ENCODE measurements at regions of chr15 and their contacts with region 1.

Region 1: GRCh38 chr15:66851226-66852071 is 149.4 kb downstream of the SMAD6 start:
- DNase-seq: peak; percentile 68 to 77 (median 76)
- H3K4me3 ChIP-seq: no peak overlapping the region
- H3K4me3 Mint-ChIP-seq: peak overlapping the region; percentile 55 to 78
- H3K27ac ChIP-seq: no peak overlapping the region
- H3K27ac Mint-ChIP-seq: peak overlapping the region in 1 of 7 donors; percentile 41
- H3K4me1 ChIP-seq: peaks cover 9 to 12% of the 10 kb centered on the region in 2 donors
- H3K4me1 Mint-ChIP-seq: peaks cover 20% of the 10 kb centered on the region
- H3K27me3 ChIP-seq: peaks cover 0 to 2% of the 10 kb centered on the region in 2 donors
- H3K27me3 Mint-ChIP-seq: peaks cover 8 to 26% (median 26%) of the 10 kb centered on the region in 3 donors
- CTCF ChIP-seq: peak; percentile 96

Region 2: DNA sequence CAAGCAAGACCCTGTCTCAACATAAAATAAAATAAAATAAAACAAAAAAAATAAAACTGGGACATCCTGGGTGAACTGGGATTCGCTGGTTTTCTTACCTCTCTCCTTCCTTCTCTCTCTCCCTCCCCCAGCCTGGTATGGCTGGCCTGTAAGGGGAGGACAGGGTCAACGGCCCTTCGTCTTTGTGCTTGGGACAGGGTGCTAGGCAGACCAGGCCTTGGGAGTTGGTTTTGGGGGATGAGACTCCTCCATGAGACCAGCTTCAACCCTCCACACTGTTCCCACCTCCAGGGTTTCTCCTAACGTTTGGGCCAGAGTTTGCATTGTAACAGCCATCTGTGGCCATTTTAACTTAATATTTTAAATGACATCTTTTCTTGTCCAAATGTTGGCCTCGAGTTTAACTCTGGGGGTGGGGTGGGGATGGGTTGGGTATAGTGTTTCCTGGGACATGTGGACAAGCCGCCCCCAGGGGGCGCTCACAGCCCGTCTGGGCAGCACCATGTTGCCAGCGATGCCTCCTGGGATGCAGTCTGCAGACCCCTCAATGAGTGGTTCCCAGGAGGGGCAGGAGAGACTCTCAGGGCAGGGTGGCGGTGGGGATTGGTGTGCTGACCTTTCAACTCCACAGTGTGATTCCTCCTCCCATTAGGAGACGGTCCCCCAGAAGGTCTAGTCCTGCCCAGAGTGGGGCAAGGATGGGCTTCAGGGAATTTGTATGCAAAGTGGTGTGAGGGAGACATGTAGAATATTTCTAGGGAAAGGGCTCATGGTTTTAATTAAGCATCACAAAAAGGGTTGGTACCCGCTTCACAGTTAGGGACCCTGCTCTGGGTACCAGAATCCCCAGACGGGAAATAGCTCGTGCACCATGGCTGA is 247.9 kb before region 1 on chr15:
- intact Hi-C with region 1: loop called (anchors 2 to 5 kb)
- DNase-seq: peak; percentile 59 to 77 (median 66)
- H3K4me3 ChIP-seq: no peak overlapping the region
- H3K4me3 Mint-ChIP-seq: no peak overlapping the region
- H3K27ac ChIP-seq: no peak overlapping the region
- H3K27ac Mint-ChIP-seq: peak overlapping the region in 1 of 7 donors; percentile 80
- H3K4me1 ChIP-seq: no peaks in the 10 kb centered on the region
- H3K4me1 Mint-ChIP-seq: no peaks in the 10 kb centered on the region
- H3K27me3 ChIP-seq: no peaks in the 10 kb centered on the region
- H3K27me3 Mint-ChIP-seq: peaks cover 2 to 12% (median 3%) of the 10 kb centered on the region in 3 donors
- CTCF ChIP-seq: peak; percentile 90

Region 3: GRCh38 chr15:66619151-66619903 is 232.1 kb before region 1 on chr15:
- intact Hi-C with region 1: loop called (anchors 5 kb)
- DNase-seq: peak; percentile 52 to 73 (median 70)
- H3K4me3 ChIP-seq: no peak overlapping the region
- H3K4me3 Mint-ChIP-seq: no peak overlapping the region
- H3K27ac ChIP-seq: peak overlapping the region in 1 of 2 donors; percentile 34
- H3K27ac Mint-ChIP-seq: peak overlapping the region in 3 of 7 donors; percentile 40 to 79 (median 60)
- H3K4me1 ChIP-seq: peaks cover 65 to 69% of the 10 kb centered on the region in 2 donors
- H3K4me1 Mint-ChIP-seq: peaks cover 70% of the 10 kb centered on the region
- H3K27me3 ChIP-seq: peaks cover 0 to 6% of the 10 kb centered on the region in 2 donors
- H3K27me3 Mint-ChIP-seq: peaks cover 3 to 14% (median 5%) of the 10 kb centered on the region in 3 donors
- CTCF ChIP-seq: peak; percentile 94

Region 4: DNA sequence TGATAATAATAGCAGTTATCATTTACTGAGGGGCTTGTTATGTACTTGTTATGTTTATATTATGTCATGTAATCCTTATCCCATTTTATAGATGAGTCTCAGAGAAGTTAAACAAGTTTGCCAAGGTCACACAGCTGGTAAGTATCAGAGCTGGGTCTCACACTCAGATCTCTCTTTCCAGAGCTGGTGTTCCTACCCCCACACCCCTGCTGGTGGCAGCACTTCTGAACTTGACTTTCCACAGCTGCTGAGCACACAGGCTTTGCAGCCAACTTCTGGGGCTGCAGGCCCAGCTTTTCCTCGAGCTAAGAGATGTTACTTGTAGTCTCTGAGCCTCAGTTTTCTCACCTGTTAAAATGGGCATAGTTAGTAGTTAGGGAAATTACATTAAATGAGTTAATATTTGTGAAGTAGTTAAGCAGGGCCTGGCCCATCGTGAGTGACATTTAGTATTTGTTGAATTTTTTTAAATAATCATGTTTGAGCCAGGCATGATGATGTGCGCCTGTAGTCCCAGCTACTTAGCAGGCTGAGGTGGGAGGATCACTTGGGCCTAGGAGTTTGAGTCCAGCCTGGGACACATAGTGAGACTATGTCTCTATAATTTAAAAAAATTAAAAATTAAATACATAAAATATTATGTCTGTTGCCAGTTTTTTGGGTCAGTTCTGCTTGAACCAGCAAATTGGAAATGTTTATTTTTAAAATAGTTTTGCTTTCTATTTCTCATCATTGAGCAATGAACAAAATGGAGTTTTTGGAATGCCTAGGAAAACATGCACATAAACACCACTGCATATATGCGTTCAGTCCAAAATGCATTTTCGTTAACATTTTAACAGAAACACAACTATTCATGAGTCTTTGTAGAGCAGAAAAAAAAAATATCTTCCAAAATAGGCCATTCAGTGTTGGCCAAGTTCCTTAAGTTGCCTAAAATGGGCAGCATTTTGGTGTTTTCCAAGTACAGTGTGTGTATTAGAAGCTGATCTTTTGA is 62.1 kb before region 1 on chr15:
- intact Hi-C with region 1: loop called in 1 of 2 experiments (anchors 5 kb)
- DNase-seq: peak; percentile 7 to 24 (median 9)
- H3K4me3 ChIP-seq: no peak overlapping the region
- H3K4me3 Mint-ChIP-seq: no peak overlapping the region
- H3K27ac ChIP-seq: no peak overlapping the region
- H3K27ac Mint-ChIP-seq: no peak overlapping the region
- H3K4me1 ChIP-seq: no peaks in the 10 kb centered on the region
- H3K4me1 Mint-ChIP-seq: peaks cover 2% of the 10 kb centered on the region
- H3K27me3 ChIP-seq: no peaks in the 10 kb centered on the region
- H3K27me3 Mint-ChIP-seq: peaks cover 2 to 3% (median 3%) of the 10 kb centered on the region in 3 donors
- CTCF ChIP-seq: peak; percentile 40

Region 5: GRCh38 chr15:66803182-66803729 is 48.2 kb before region 1 on chr15:
- intact Hi-C with region 1: loop called in 1 of 2 experiments (anchors 5 kb)
- DNase-seq: peak; percentile 51 to 77 (median 61)
- H3K4me3 ChIP-seq: no peak overlapping the region
- H3K4me3 Mint-ChIP-seq: no peak overlapping the region
- H3K27ac ChIP-seq: peak overlapping the region in 1 of 2 donors; percentile 4
- H3K27ac Mint-ChIP-seq: peak overlapping the region in 1 of 7 donors; percentile 38
- H3K4me1 ChIP-seq: peaks cover 11 to 15% of the 10 kb centered on the region in 2 donors
- H3K4me1 Mint-ChIP-seq: peaks cover 24% of the 10 kb centered on the region
- H3K27me3 ChIP-seq: no peaks in the 10 kb centered on the region
- H3K27me3 Mint-ChIP-seq: peaks cover 0 to 5% (median 3%) of the 10 kb centered on the region in 3 donors
- CTCF ChIP-seq: no peak

Region 6: GRCh38 chr15:66835321-66835878 is 16.0 kb before region 1 on chr15:
- intact Hi-C with region 1: loop called in 1 of 2 experiments (anchors 1 kb)
- DNase-seq: peak; percentile 72 to 83 (median 80)
- H3K4me3 ChIP-seq: no peak overlapping the region
- H3K4me3 Mint-ChIP-seq: no peak overlapping the region
- H3K27ac ChIP-seq: peak overlapping the region; percentile 34 to 56
- H3K27ac Mint-ChIP-seq: peak overlapping the region; percentile 71 to 89 (median 85)
- H3K4me1 ChIP-seq: peaks cover 50 to 61% of the 10 kb centered on the region in 2 donors
- H3K4me1 Mint-ChIP-seq: peaks cover 57% of the 10 kb centered on the region
- H3K27me3 ChIP-seq: no peaks in the 10 kb centered on the region
- H3K27me3 Mint-ChIP-seq: no peaks in the 10 kb centered on the region
- CTCF ChIP-seq: no peak

Region 7: DNA sequence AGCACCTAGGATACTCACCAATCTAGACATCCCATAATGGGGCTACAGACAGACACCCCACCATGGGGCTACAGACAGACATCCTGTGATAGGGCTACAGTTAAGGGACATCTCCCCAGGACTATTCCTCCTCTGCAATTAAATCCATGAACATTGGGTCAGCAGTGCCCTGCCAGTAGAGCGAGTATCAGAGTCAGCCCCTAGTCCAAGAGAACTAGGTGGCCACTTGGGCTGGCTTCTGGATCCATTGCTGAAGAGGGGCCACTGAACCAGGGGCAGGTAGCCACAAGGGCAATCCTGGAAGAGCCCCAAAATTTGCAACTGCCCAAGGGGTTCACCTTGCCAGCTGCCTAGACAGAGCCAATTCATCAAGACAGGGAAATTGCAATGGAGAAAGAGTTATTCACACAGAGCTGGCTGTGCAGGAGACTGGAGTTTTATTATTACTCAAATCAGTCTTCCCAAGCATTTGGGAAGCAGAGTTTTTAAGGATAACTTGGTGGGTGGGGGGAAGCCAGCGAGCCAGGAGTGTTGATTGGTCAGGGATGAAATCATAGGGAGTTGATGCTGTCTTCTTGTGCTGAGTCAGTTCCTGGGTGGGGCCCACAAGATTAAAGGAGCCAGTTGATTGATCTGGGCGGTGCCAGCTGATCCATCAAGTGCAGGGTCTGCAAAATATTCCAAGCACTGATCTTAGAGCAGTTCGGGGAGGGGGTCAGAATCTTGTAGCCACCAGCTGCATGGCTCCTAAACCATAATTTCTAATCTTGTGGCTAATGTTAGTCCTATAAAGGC is 43.7 kb after region 1 on chr15:
- intact Hi-C with region 1: no loop called
- DNase-seq: no peak
- H3K4me3 ChIP-seq: no peak overlapping the region
- H3K4me3 Mint-ChIP-seq: peak overlapping the region in 1 of 2 donors; percentile 51
- H3K27ac ChIP-seq: no peak overlapping the region
- H3K27ac Mint-ChIP-seq: no peak overlapping the region
- H3K4me1 ChIP-seq: no peaks in the 10 kb centered on the region
- H3K4me1 Mint-ChIP-seq: peaks cover 12% of the 10 kb centered on the region
- H3K27me3 ChIP-seq: no peaks in the 10 kb centered on the region
- H3K27me3 Mint-ChIP-seq: peaks cover 0 to 5% (median 2%) of the 10 kb centered on the region in 3 donors
- CTCF ChIP-seq: no peak